ENCODE measurements at regions of chr3 and their contacts with region 1.

Region 1: GRCh38 chr3:138594150-138594934 is at the start of gene CEP70:
- DNase-seq: peak; percentile 87 to 95
- ATAC-seq: peak; percentile 93 to 97 (median 94)
- H3K4me3 ChIP-seq: peak within 1 kb of the TSS; percentile 75
- H3K4me3 Mint-ChIP-seq: peak within 1 kb of the TSS; percentile 89
- H3K27ac ChIP-seq: peak within 1 kb of the TSS; percentile 82
- H3K27ac Mint-ChIP-seq: peak within 1 kb of the TSS; percentile 87 to 88
- H3K4me1 ChIP-seq: peaks cover 14% of the 10 kb centered on the region
- H3K4me1 Mint-ChIP-seq: peaks cover 6 to 12% of the 10 kb centered on the region in 2 donors
- H3K27me3 ChIP-seq: no peaks in the 10 kb centered on the region
- H3K27me3 Mint-ChIP-seq: no peaks in the 10 kb centered on the region
- CTCF ChIP-seq: peak; percentile 85
- total RNA-seq, gene CEP70: 17.0 to 23.9 (median 22.7) TPM

Region 2: GRCh38 chr3:138608322-138609135 is 14.2 kb after region 1 on chr3 and contains the start of gene FAIM:
- intact Hi-C with region 1: loop called (anchors 1 kb)
- DNase-seq: peak; percentile 71 to 77
- ATAC-seq: peak; percentile 78 to 85 (median 82)
- H3K4me3 ChIP-seq: peak within 1 kb of the TSS; percentile 69
- H3K4me3 Mint-ChIP-seq: peak within 1 kb of the TSS; percentile 91
- H3K27ac ChIP-seq: peak within 1 kb of the TSS; percentile 85
- H3K27ac Mint-ChIP-seq: peak within 1 kb of the TSS; percentile 94 to 99
- H3K4me1 ChIP-seq: peaks cover 14% of the 10 kb centered on the region
- H3K4me1 Mint-ChIP-seq: peaks cover 17 to 22% of the 10 kb centered on the region in 2 donors
- H3K27me3 ChIP-seq: no peaks in the 10 kb centered on the region
- H3K27me3 Mint-ChIP-seq: peaks cover 0 to 4% of the 10 kb centered on the region in 2 donors
- CTCF ChIP-seq: no peak
- total RNA-seq, gene FAIM: 4.6 to 7.6 (median 5.6) TPM

Region 3: DNA sequence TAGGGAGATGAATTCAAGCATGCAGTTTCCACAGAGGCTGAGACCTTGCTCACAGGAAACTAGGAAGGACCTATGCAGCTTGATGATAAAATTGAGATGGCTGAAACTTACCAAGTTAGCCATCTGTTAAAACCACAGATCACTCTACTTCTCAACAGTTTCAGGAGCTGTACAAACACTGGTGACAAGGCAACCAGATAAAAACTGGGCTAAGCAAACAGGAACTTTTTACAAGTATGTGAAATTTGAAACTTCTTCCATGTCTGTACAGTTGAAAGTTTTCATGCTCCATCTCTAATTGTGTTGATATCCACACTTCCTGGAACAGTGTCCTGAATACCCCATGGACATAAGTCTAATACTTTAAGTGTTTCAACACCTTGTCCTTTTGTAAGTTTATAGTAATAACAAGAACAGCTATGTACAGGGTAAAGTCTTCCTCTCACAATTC is 92.5 kb after region 1 on chr3:
- intact Hi-C with region 1: loop called (anchors 5 kb)
- DNase-seq: peak in 1 of 2 donors; percentile 16
- ATAC-seq: peak; percentile 90 to 97 (median 91)
- H3K4me3 ChIP-seq: no peak overlapping the region
- H3K4me3 Mint-ChIP-seq: peak overlapping the region; percentile 67
- H3K27ac ChIP-seq: peak overlapping the region; percentile 42
- H3K27ac Mint-ChIP-seq: peak overlapping the region; percentile 74 to 86
- H3K4me1 ChIP-seq: peaks cover 10% of the 10 kb centered on the region
- H3K4me1 Mint-ChIP-seq: peaks cover 20 to 22% of the 10 kb centered on the region in 2 donors
- H3K27me3 ChIP-seq: no peaks in the 10 kb centered on the region
- H3K27me3 Mint-ChIP-seq: no peaks in the 10 kb centered on the region
- CTCF ChIP-seq: no peak

Region 4: DNA sequence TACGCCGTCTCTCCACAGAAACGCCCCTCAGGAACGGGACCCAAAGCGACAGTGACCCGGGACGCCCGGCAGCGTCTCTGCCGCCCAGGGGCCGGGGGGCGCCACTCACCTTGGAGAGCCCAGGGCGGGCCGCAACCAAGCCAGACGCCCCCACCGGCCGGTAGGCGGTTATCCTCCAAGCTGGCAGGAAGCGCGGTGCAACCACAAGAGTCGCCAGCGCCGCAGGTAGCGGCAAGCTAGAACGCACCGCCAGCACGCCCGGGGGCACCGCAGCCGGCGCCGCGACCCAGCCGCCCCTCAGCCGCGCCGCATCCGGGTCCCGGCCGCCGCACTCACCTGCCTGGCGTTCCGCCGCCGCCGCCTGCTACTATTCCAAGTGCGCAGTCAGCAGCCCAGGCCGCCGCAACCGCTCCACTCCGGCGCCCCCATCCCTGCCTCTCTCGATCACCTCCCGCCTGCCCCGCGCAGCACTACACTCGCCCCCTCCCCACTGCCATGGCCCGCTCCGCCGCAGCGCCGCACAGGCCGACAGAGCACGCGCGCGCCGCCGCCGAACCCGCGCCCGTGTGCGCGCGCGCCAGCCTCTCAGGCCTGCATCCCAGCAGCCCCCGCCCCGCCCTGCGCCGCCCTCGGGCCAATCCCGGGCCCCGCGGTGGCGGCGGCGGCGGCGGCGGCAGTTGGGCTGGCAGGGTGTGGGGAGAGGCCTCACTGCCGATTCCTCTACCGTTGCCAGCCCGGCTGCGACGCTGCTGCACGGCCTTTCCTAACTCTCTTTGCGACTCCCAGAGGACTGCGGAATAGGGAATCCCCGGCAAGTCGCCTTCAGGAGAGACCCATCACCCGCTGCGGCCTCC is 240.2 kb after region 1 on chr3 and contains the start of gene PIK3CB:
- intact Hi-C with region 1: loop called (anchors 1 kb)
- DNase-seq: peak; percentile 72 to 89
- ATAC-seq: peak; percentile 88 to 94 (median 93)
- H3K4me3 ChIP-seq: peak within 1 kb of the TSS; percentile 67
- H3K4me3 Mint-ChIP-seq: peak within 1 kb of the TSS; percentile 95
- H3K27ac ChIP-seq: peak within 1 kb of the TSS; percentile 60
- H3K27ac Mint-ChIP-seq: peak within 1 kb of the TSS; percentile 81 to 88
- H3K4me1 ChIP-seq: peaks cover 17% of the 10 kb centered on the region
- H3K4me1 Mint-ChIP-seq: peaks cover 18% of the 10 kb centered on the region in 2 donors
- H3K27me3 ChIP-seq: no peaks in the 10 kb centered on the region
- H3K27me3 Mint-ChIP-seq: no peaks in the 10 kb centered on the region
- CTCF ChIP-seq: no peak
- total RNA-seq, gene PIK3CB: 13.2 to 20.2 (median 18.0) TPM

Region 5: GRCh38 chr3:138915503-138916498 is 321.5 kb after region 1 on chr3:
- intact Hi-C with region 1: loop called (anchors 1 kb)
- DNase-seq: peak; percentile 79 to 88
- ATAC-seq: peak; percentile 87 to 91 (median 88)
- H3K4me3 ChIP-seq: peak overlapping the region; percentile 63
- H3K4me3 Mint-ChIP-seq: peak overlapping the region; percentile 87
- H3K27ac ChIP-seq: peak overlapping the region; percentile 12
- H3K27ac Mint-ChIP-seq: peak overlapping the region in 1 of 2 donors; percentile 79
- H3K4me1 ChIP-seq: peaks cover 18% of the 10 kb centered on the region
- H3K4me1 Mint-ChIP-seq: peaks cover 4 to 7% of the 10 kb centered on the region in 2 donors
- H3K27me3 ChIP-seq: peaks cover 2% of the 10 kb centered on the region
- H3K27me3 Mint-ChIP-seq: peaks cover 8 to 13% of the 10 kb centered on the region in 2 donors
- CTCF ChIP-seq: peak; percentile 86

Region 6: DNA sequence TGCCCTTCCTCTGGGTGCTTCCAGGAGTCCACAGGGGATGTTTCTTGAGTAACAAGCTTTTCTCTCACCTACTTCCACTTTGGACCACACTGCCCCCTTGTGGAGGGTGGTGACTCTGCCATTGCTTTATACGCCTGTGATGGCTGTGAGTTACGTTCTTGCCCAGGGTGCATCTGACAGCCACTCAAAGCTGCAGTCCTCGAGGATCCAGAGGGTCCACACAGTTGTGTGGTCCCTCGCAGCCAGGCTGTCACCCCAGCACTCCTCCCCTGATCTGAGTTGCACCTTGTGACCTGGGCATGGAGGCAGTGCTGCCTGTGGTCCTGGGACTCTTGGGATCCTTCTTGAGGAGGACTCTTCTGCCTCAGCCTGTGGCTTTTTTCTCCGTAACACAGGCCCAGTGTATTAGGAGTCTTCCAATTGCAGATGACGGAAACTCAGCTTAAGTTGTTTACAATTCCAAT is 329.2 kb after region 1 on chr3:
- intact Hi-C with region 1: loop called (anchors 1 kb)
- DNase-seq: peak; percentile 77 to 92
- ATAC-seq: peak; percentile 89 to 99 (median 98)
- H3K4me3 ChIP-seq: no peak overlapping the region
- H3K4me3 Mint-ChIP-seq: no peak overlapping the region
- H3K27ac ChIP-seq: no peak overlapping the region
- H3K27ac Mint-ChIP-seq: no peak overlapping the region
- H3K4me1 ChIP-seq: peaks cover 3% of the 10 kb centered on the region
- H3K4me1 Mint-ChIP-seq: peaks cover 0 to 4% of the 10 kb centered on the region in 2 donors
- H3K27me3 ChIP-seq: no peaks in the 10 kb centered on the region
- H3K27me3 Mint-ChIP-seq: peaks cover 8 to 15% of the 10 kb centered on the region in 2 donors
- CTCF ChIP-seq: peak; percentile 83

Region 7: GRCh38 chr3:139343895-139344856 is 749.8 kb after region 1 on chr3 and contains the start of gene MRPS22:
- intact Hi-C with region 1: loop called (anchors 5 kb)
- DNase-seq: peak; percentile 70 to 92
- ATAC-seq: peak; percentile 94 to 99 (median 99)
- H3K4me3 ChIP-seq: peak within 1 kb of the TSS; percentile 97
- H3K4me3 Mint-ChIP-seq: no peak within 1 kb of the TSS
- H3K27ac ChIP-seq: peak within 1 kb of the TSS; percentile 82
- H3K27ac Mint-ChIP-seq: peak within 1 kb of the TSS in 1 of 2 donors; percentile 39
- H3K4me1 ChIP-seq: peaks cover 16% of the 10 kb centered on the region
- H3K4me1 Mint-ChIP-seq: peaks cover 0 to 9% of the 10 kb centered on the region in 2 donors
- H3K27me3 ChIP-seq: peaks cover 3% of the 10 kb centered on the region
- H3K27me3 Mint-ChIP-seq: peaks cover 8 to 13% of the 10 kb centered on the region in 2 donors
- CTCF ChIP-seq: no peak
- total RNA-seq, gene MRPS22: 32.4 to 39.1 (median 35.3) TPM

Measured in natural killer cell (primary cell).